ENCODE measurements at regions of chr9 and their contacts with region 1.

Region 1: DNA sequence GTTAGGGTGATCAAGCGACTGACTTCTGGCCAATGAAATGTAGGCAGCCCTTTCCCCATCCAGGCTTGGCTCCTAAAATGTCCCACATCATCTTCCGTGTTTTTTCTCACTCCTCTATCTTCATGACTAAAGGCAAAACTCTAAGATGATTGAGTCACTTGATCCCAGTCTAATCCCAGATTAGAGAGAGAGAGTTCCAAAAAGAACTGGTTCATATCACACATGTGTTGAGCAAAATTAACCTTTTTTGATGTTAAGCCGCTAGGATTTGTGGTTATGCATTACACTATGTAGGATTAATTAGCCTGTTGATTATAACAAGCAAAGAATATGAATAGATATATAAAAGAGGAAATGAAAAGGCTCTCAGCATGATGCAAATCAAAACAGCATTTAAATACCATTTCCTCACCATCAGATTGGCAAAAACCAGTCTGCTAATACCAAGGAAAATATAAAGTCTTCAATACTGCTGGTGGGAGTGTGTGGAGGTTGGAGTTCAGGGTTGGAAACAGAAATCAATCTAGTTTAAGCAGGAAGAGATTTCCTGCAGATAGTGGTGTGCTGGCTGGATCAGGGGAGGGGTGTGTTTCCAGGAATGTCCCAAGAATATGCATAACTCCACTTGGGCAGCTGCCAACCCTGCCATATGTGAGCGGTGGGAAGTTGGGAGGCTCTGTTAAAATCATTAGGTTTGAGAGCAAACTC is 187.6 kb upstream of the S1PR3 start:
- DNase-seq: no peak
- ATAC-seq: no peak
- H3K4me3 ChIP-seq: no peak overlapping the region
- H3K27ac ChIP-seq: no peak overlapping the region
- H3K4me1 ChIP-seq: peaks cover 0 to 22% (median 8%) of the 10 kb centered on the region in 9 donors
- H3K27me3 ChIP-seq: peaks cover 0 to 39% (median 0%) of the 10 kb centered on the region in 7 donors
- CTCF ChIP-seq: no peak

Region 2: DNA sequence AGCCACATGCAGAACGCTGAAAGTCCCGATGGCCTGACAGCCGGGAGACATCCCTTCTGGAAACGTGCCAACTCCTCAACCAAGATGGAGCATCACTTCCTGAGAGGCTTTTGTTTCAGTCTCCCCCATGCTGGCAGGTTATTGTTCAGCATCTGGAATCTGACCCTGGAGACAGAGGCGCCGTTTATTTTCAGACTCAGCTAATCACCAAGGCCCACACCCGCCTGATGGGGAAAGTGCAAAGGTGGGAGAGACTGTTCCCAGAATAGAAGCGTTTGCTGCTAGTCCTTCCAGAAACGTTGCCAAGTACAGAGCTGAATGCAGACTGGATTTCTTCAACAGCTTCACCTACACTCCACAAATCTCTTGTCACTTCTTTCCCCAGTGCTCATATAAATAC is 145.7 kb after region 1 on chr9:
- intact Hi-C with region 1: loop called in 1 of 10 experiments (anchors 10 kb)
- DNase-seq: peak; percentile 44 to 73
- ATAC-seq: peak; percentile 80 to 96 (median 90)
- H3K4me3 ChIP-seq: no peak overlapping the region
- H3K27ac ChIP-seq: peak overlapping the region in 9 of 10 donors; percentile 42 to 80 (median 61)
- H3K4me1 ChIP-seq: peaks cover 5 to 52% (median 32%) of the 10 kb centered on the region in 9 donors
- H3K27me3 ChIP-seq: no peaks in the 10 kb centered on the region
- CTCF ChIP-seq: no peak

Measured in heart right ventricle (tissue), 16 donors.